ENCODE measurements at regions of chr15 and their contacts with region 1.

Region 1: DNA sequence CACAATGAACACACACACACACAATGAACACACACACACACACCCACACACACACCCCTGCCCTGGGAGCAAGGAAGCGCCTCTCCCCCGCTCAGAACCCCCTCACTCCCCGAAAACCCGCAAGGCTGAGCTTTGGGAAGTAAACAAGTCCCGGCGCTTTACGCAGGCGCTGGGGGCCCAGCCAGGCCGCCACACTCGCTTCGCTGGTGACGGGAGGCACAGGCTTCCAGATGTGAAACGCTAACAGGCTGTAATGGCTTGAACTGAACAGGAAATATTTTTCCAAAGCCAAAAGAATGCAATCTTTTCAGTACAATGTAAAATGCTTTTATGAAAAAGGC is 122.7 kb upstream of the IGF1R start:
- DNase-seq: peak; percentile 75
- ATAC-seq: peak; percentile 73

Region 2: GRCh38 chr15:98548154-98548971 is 22.7 kb after region 1 on chr15:
- intact Hi-C with region 1: no loop called
- DNase-seq: peak; percentile 87
- ATAC-seq: peak; percentile 95

Region 3: GRCh38 chr15:98599909-98600691 is 74.5 kb after region 1 on chr15:
- intact Hi-C with region 1: loop called (anchors 5 kb)
- DNase-seq: peak; percentile 65
- ATAC-seq: peak; percentile 91

Region 4: GRCh38 chr15:98612490-98613110 is 87.0 kb after region 1 on chr15:
- intact Hi-C with region 1: no loop called
- DNase-seq: no peak
- ATAC-seq: no peak

Region 5: DNA sequence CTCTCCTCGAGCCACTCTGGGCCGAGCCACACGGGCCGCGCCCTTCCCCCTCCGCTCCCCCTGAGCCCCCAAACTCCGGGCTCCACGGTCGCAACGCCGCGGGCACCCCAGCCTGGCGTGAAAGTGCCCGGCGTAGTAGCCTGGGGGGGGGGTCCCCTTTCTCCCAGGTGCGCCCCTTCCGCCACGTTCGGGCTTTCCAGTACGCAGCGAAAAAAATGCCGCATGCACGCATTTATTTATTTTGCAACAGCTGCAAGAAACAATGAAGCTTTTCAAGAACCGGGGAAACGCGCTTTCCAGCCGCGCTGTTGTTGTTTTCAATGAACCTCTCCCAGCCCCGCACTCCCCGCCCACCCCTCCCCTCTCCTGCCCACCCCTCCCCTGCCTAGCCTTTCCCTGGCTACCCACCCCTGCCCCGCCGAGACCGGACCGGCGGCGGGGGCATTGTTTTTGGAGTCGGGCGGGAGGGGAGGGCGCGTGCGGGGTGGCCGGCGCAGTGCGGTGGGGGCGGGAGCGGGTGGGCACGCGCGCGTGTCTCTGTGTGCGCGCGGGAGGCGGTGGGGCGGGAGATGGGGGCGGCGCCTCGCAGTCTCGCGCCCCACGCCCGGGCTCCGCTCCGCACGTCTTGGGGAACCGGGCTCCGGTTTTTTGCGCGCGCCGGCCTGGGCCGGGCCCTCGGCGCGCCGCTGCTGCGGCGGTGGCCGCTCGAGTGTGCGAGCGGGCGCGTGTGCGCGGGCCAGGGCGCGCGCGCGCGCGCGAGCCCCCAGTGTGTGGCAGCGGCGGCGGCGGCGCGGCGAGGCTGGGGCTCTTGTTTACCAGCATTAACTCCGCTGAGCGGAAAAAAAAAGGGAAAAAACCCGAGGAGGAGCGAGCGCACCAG is 122.4 kb after region 1 on chr15 and contains the start of gene IGF1R:
- intact Hi-C with region 1: loop called (anchors 5 kb)
- DNase-seq: peak; percentile 91
- ATAC-seq: peak; percentile 79
- total RNA-seq, gene IGF1R: 85.9 TPM

Region 6: GRCh38 chr15:99076552-99077308 is 551.1 kb after region 1 on chr15:
- intact Hi-C with region 1: loop called (anchors 10 kb)
- DNase-seq: peak; percentile 69
- ATAC-seq: peak; percentile 91